Testis (tissue), 5 donors: ENCODE measurements at regions of chr1 and their contacts with region 1.

Region 1: GRCh38 chr1:211830330-211831142 is at the start of gene LPGAT1:
- DNase-seq: peak; percentile 79
- H3K4me3 ChIP-seq: peak within 1 kb of the TSS; percentile 77 to 98
- H3K27ac ChIP-seq: peak within 1 kb of the TSS; percentile 83 to 97
- H3K4me1 ChIP-seq: no peaks in the 10 kb centered on the region
- H3K27me3 ChIP-seq: no peaks in the 10 kb centered on the region
- CTCF ChIP-seq: peak; percentile 36 to 66 (median 63)
- POLR2A ChIP-seq: no peak
- total RNA-seq, gene LPGAT1: 44.1 to 70.5 TPM

Region 2: DNA sequence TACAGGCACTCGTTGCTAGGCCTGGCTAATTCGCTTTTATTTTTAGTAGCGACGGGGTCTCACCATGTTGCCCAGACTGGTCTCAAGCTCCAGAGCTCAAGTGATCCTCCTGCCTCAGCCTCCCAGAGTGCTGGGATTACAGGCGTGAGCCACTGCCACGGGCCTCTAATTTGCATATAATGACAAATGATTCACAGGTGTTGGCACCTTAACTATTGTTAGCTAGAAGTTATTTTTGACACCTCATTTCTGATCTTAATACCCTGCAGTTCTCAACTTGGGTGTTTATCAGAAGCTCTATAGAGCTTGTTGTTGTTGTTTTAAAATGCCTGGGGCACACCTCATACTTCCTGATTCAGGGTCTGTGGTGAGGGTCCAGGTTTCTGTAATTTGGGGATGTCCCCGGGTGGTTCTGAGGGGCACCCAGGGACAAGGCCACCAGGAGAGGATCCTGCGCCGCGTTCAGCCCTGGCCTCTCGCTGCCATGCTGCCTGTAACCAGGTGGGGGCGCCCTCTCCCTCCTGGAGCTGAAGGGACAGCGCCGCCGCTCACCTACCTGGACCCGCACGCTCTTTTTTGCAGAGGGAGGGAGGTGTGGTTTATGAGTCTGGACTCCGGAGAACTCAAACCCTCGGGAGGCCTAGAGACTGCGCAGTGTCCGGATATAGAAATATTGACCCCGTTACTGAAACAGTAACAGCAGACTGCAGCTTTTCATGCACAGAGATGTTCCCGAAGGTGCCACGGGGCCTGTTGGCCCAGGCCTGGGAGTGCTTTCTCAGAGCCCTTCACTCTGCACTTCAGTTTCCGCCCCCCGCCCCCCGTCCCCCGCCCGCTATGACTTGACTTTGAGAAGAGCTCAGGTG is 132.1 kb before region 1 on chr1:
- intact Hi-C with region 1: loop called (anchors 5 kb)
- DNase-seq: peak; percentile 93
- H3K4me3 ChIP-seq: peak overlapping the region; percentile 10 to 44
- H3K27ac ChIP-seq: no peak overlapping the region
- H3K4me1 ChIP-seq: peaks cover 13% of the 10 kb centered on the region
- H3K27me3 ChIP-seq: no peaks in the 10 kb centered on the region
- CTCF ChIP-seq: peak; percentile 81 to 88 (median 86)
- POLR2A ChIP-seq: no peak

Region 3: GRCh38 chr1:211885747-211886522 is 55.4 kb after region 1 on chr1:
- intact Hi-C with region 1: no loop called
- DNase-seq: no peak
- H3K4me3 ChIP-seq: no peak overlapping the region
- H3K27ac ChIP-seq: no peak overlapping the region
- H3K4me1 ChIP-seq: no peaks in the 10 kb centered on the region
- H3K27me3 ChIP-seq: no peaks in the 10 kb centered on the region
- CTCF ChIP-seq: no peak
- POLR2A ChIP-seq: no peak